Breast epithelium (tissue), 4 donors: ENCODE measurements at regions of chr12 and their contacts with region 1.

Region 1: GRCh38 chr12:30828686-30829085 is 73.9 kb upstream of the CAPRIN2 start:
- DNase-seq: no peak
- H3K4me3 ChIP-seq: no peak overlapping the region
- H3K27ac ChIP-seq: no peak overlapping the region
- H3K4me1 ChIP-seq: no peaks in the 10 kb centered on the region
- H3K27me3 ChIP-seq: no peaks in the 10 kb centered on the region
- CTCF ChIP-seq: no peak
- POLR2A ChIP-seq: no peak

Region 2: GRCh38 chr12:29234965-29235626 is 1593.6 kb before region 1 on chr12:
- intact Hi-C with region 1: no loop called
- DNase-seq: no peak
- H3K4me3 ChIP-seq: no peak overlapping the region
- H3K27ac ChIP-seq: no peak overlapping the region
- H3K4me1 ChIP-seq: no peaks in the 10 kb centered on the region
- H3K27me3 ChIP-seq: no peaks in the 10 kb centered on the region
- CTCF ChIP-seq: no peak
- POLR2A ChIP-seq: no peak

Region 3: DNA sequence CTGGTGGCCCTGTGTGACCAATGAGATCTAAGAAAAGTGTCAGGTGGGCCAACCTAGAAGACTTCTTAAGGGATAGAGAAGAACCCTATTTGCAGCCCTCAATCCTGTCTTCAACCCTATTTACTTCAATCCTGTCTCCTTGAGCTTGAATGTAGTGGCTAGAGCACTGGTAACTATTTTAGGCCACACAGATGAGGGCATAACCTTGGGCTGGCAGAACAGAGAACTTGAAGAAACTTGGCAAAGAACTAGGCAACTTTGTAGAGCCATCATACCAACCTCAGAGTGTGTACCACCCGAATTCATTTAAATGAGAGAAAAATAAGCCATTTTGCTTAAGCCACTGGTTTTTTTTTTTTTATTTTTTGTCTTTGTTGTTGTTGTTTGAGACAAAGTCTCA is 1139.8 kb before region 1 on chr12:
- intact Hi-C with region 1: loop called (anchors 5 kb)
- DNase-seq: no peak
- H3K4me3 ChIP-seq: no peak overlapping the region
- H3K27ac ChIP-seq: no peak overlapping the region
- H3K4me1 ChIP-seq: no peaks in the 10 kb centered on the region
- H3K27me3 ChIP-seq: no peaks in the 10 kb centered on the region
- CTCF ChIP-seq: no peak
- POLR2A ChIP-seq: no peak

Region 4: DNA sequence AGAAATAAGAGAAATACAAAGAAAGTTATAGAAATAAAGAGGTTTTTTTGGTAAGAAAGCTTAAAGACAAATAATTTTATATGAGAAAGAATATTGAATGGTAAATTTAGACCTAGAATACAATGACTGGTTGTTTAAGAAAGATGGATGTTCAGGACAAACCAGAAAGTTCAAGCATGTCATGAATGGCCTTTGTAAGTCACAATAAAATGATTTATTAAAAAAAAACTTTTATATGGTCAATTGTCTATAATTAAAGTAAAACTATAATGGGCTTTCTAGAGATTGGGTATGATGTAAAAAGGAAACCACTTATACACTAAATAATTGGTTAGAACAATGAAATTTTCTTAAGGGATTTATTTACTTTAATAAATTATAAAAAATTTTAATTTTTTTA is 54.1 kb before region 1 on chr12:
- intact Hi-C with region 1: no loop called
- DNase-seq: no peak
- H3K4me3 ChIP-seq: no peak overlapping the region
- H3K27ac ChIP-seq: no peak overlapping the region
- H3K4me1 ChIP-seq: no peaks in the 10 kb centered on the region
- H3K27me3 ChIP-seq: no peaks in the 10 kb centered on the region
- CTCF ChIP-seq: no peak
- POLR2A ChIP-seq: no peak

Region 5: GRCh38 chr12:30874455-30875321 is 46.0 kb after region 1 on chr12:
- intact Hi-C with region 1: no loop called
- DNase-seq: no peak
- H3K4me3 ChIP-seq: no peak overlapping the region
- H3K27ac ChIP-seq: no peak overlapping the region
- H3K4me1 ChIP-seq: no peaks in the 10 kb centered on the region
- H3K27me3 ChIP-seq: no peaks in the 10 kb centered on the region
- CTCF ChIP-seq: no peak
- POLR2A ChIP-seq: no peak

Region 6: DNA sequence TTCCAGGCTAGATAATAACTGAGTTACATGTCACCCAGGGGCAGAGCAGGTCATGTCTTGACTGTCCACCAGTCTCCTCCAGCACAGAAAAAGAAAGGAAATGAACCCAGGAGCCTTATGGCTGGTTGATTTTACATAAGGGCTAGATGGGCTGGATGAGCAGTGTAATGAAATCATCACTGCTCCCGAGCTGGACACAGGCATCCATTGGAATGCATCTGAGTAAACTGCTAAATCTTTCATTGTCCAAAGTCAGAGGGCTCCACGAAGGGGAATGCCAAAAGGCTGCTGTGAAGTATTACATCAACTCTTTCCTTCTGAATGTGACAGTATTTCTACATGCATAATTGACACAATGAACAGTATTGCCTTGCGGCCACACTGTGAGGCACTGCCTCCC is 67.8 kb after region 1 on chr12:
- intact Hi-C with region 1: no loop called
- DNase-seq: no peak
- H3K4me3 ChIP-seq: no peak overlapping the region
- H3K27ac ChIP-seq: no peak overlapping the region
- H3K4me1 ChIP-seq: no peaks in the 10 kb centered on the region
- H3K27me3 ChIP-seq: no peaks in the 10 kb centered on the region
- CTCF ChIP-seq: no peak
- POLR2A ChIP-seq: no peak